K562 (cell line): ENCODE measurements at regions of chr11 and their contacts with region 1.

Region 1: GRCh38 chr11:63694596-63694995 is 13.3 kb downstream of the RTN3 start:
- DNase-seq: no peak
- ATAC-seq: no peak
- H3K4me3 ChIP-seq: no peak overlapping the region
- H3K27ac ChIP-seq: 0 out of 3 replicates have a peak overlapping the region, but pooled peaks have one; percentile 20
- H3K4me1 ChIP-seq: peaks cover 4 to 15% of the 10 kb centered on the region in 2 experiments; a peak in 4 of 5 replicates
- H3K27me3 ChIP-seq: no peaks in the 10 kb centered on the region
- CTCF ChIP-seq: no peak
- EP300 ChIP-seq: no peak
- POLR2A ChIP-seq: no peak
- RAD21 ChIP-seq: no peak

Region 2: GRCh38 chr11:63681321-63682049 is 13.1 kb before region 1 on chr11 and contains the start of gene RTN3:
- CTCF ChIA-PET with region 1: no interaction called
- POLR2A ChIA-PET with region 1: interaction called, 30 read pairs
- in situ Hi-C with region 1: no loop called
- intact Hi-C with region 1: no loop called
- DNase-seq: peak; percentile 97 to 99 (median 98)
- ATAC-seq: peak; percentile 86
- H3K4me3 ChIP-seq: peak within 1 kb of the TSS; percentile 94
- H3K27ac ChIP-seq: peak within 1 kb of the TSS; percentile 94
- H3K4me1 ChIP-seq: peaks cover 21 to 29% of the 10 kb centered on the region in 2 experiments
- H3K27me3 ChIP-seq: no peaks in the 10 kb centered on the region
- CTCF ChIP-seq: no peak
- EP300 ChIP-seq: no peak
- POLR2A ChIP-seq: peak; percentile 98
- RAD21 ChIP-seq: no peak
- polyA plus RNA-seq, gene RTN3: 41.6 to 44.3 TPM